Esophagus muscularis mucosa (tissue), 4 donors: ENCODE measurements at regions of chr16 and their contacts with region 1.

Region 1: GRCh38 chr16:86343027-86343787 is 167.1 kb upstream of the FOXF1 start:
- DNase-seq: peak; percentile 95
- H3K4me3 ChIP-seq: peak overlapping the region; percentile 26 to 48 (median 36)
- H3K27ac ChIP-seq: peak overlapping the region; percentile 92 to 96 (median 96)
- H3K4me1 ChIP-seq: peaks cover 14 to 50% (median 46%) of the 10 kb centered on the region in 4 donors
- H3K27me3 ChIP-seq: no peaks in the 10 kb centered on the region
- CTCF ChIP-seq: no peak
- EP300 ChIP-seq: peak; percentile 98
- POLR2A ChIP-seq: no peak

Region 2: DNA sequence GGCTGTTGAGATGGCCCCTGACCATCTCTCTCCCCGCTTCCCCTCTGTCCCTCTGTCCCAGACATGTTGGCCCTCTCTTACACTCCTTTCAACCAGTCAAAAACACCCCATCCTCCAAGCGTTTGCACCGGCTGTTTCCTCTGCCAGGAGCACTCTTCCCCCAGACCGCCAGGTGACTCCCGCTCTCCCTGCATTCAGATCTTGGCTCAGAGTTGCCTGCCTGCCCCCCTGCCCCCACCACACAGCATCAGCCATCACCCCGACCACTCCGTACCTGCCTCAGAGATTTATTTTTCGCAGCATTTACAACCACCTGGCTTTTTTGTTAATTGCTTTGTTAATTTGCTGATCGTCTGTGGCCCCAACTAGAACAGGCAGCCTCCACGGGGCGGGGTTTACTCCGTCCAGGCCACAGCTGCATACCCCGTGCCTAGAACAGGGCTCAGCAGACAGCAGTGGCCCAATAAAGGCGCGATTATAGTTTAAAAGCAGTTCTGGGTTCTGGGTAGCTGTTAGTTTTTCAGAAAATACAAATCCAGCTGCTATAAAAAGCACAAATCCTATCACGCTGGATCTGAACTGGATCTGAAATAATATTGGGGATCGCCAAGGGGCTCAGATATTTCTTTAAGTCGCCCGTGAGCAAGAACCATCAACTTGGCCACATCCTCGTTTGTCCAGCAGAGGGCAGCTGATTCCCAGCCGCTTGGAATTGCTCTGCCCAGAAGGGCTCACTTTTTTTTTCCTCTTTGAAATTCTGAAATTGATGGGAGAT is 270.7 kb before region 1 on chr16:
- intact Hi-C with region 1: loop called (anchors 2 kb)
- DNase-seq: no peak
- H3K4me3 ChIP-seq: no peak overlapping the region
- H3K27ac ChIP-seq: no peak overlapping the region
- H3K4me1 ChIP-seq: peaks cover 0 to 25% (median 8%) of the 10 kb centered on the region in 4 donors
- H3K27me3 ChIP-seq: no peaks in the 10 kb centered on the region
- CTCF ChIP-seq: peak; percentile 80 to 88 (median 84)
- EP300 ChIP-seq: no peak
- POLR2A ChIP-seq: no peak

Region 3: DNA sequence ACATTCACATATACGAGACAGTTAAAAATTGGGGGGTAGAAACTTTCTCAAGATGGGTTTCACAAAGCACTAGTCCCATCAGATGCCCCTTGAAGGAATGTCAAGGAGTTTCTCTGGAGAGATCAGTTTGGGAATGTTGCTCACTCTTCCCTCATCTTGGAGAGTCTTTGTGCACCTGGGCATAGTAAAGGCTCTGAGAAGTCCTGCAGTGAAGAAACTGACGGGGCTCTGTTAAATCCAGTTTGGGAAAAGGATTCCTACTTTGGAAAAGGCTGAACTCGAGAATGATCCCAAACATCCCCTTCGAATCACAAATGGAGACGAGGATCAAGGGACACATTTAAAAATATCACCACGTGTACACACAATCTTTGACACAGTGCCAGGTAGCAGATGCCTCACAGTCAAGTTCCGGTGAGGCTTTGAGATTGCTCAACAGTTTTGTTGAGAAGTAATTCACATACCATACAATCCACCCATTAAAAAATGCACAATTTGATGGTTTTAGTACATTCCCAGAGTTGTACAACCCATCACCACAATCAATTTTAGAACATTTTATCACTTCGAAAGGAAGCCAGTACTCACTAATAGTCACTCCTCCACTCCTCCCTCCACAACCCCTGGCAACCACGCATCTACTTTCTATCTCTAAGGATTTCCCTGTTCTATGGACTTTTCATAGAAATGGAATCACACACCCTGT is 36.2 kb before region 1 on chr16:
- intact Hi-C with region 1: loop called (anchors 5 kb)
- DNase-seq: no peak
- H3K4me3 ChIP-seq: no peak overlapping the region
- H3K27ac ChIP-seq: peak overlapping the region; percentile 49 to 92 (median 67)
- H3K4me1 ChIP-seq: peaks cover 3 to 43% (median 32%) of the 10 kb centered on the region in 4 donors
- H3K27me3 ChIP-seq: no peaks in the 10 kb centered on the region
- CTCF ChIP-seq: no peak
- EP300 ChIP-seq: no peak
- POLR2A ChIP-seq: no peak

Region 4: DNA sequence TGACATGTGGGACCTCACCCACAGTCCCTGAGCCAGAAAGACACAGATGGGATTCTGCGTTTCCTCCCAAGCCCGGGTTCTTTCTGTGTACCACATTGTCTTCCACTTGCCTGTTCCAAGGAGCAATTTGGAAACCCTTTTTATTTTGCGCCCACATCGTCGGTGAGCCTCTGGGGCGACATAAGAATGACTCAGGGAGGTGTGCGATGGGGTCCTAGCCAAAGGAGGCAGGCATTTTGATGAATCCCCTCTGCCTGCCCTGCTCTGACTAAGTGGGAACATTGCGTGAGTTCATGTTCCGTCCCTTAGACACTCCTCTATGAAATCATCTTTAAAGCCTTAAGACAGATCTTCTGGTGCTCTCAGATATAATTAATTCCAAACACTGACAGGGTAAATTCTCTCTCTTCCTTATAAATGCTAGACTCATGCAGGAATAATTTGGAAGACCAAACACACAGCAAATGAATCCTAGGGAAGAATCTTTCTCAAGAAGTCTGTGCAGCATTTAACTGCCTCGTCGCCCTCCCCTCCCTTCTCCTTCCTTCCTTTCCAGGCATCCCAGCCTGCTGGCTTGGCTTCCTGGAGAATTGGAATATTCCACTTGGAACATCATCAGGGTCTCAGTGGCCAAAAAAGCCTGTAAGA is 114.4 kb after region 1 on chr16:
- intact Hi-C with region 1: loop called (anchors 5 kb)
- DNase-seq: peak; percentile 95
- H3K4me3 ChIP-seq: no peak overlapping the region
- H3K27ac ChIP-seq: peak overlapping the region; percentile 71 to 84 (median 80)
- H3K4me1 ChIP-seq: peaks cover 2 to 53% (median 46%) of the 10 kb centered on the region in 4 donors
- H3K27me3 ChIP-seq: peaks cover 0 to 4% (median 0%) of the 10 kb centered on the region in 4 donors
- CTCF ChIP-seq: no peak
- EP300 ChIP-seq: peak; percentile 73
- POLR2A ChIP-seq: no peak